Activated CD8-positive, alpha-beta T cell treated with anti-CD3 and anti-CD28 coated beads for 36 hours (primary cell): ENCODE measurements at regions of chr2 and their contacts with region 1.

Region 1: GRCh38 chr2:85354286-85355072 is at the starts of genes ELMOD3 and RETSAT:
- DNase-seq: peak; percentile 99
- ATAC-seq: peak; percentile 99
- H3K4me3 Mint-ChIP-seq: peak within 1 kb of the TSS; percentile 95
- H3K27ac Mint-ChIP-seq: peak within 1 kb of the TSS; percentile 94
- H3K4me1 Mint-ChIP-seq: peaks cover 38% of the 10 kb centered on the region
- H3K27me3 Mint-ChIP-seq: no peaks in the 10 kb centered on the region
- CTCF ChIP-seq: no peak
- total RNA-seq, gene ELMOD3: 11.8 to 13.0 TPM
- total RNA-seq, gene RETSAT: 21.3 to 22.9 TPM

Region 2: DNA sequence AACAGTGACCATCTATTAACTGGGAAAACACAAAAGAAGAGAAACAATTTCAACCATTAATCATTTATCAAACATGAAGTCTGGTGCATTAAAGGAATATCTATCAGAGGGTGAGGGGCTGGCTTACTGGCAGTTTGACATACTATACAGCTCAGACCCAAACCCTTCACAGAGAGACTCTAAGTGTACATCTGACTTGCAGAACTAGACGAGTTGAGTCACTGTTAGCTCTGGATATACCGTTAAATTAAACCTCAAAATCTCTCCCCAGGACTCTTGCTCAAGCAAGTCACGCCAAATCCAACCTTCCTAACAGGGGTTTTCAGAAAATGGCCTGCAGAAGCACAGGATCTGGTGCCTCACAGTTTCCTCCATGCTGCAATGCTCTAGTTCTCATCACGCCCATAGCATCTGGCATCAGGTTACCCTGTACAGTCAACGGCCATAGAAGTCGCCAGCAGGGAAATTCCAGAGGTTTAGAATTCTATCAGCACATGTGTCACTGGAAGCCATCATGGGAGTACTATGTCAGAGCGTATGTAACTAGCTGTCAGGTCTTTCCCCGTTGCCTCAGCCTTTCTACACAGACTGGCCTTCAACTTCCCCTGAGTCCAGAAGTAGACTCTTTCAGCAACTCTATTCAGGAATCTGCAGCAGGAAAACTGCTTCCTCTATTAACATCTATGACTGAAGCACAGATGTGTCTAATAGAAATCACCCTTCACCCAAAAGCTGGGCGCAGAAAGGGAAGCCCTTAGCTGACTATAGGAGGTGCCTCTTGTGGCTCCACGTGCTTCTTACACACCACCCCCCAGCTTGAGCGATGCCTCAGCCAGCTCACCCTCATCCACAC is 36.0 kb before region 1 on chr2:
- CTCF ChIA-PET with region 1: interaction called, 5 read pairs
- POLR2A ChIA-PET with region 1: interaction called, 59 read pairs
- intact Hi-C with region 1: no loop called
- DNase-seq: peak; percentile 63
- ATAC-seq: peak; percentile 82
- H3K4me3 Mint-ChIP-seq: peak overlapping the region; percentile 26
- H3K27ac Mint-ChIP-seq: peak overlapping the region; percentile 89
- H3K4me1 Mint-ChIP-seq: peaks cover 61% of the 10 kb centered on the region
- H3K27me3 Mint-ChIP-seq: no peaks in the 10 kb centered on the region
- CTCF ChIP-seq: no peak

Region 3: GRCh38 chr2:85340034-85340892 is 14.2 kb before region 1 on chr2:
- CTCF ChIA-PET with region 1: no interaction called
- POLR2A ChIA-PET with region 1: interaction called, 16 read pairs
- intact Hi-C with region 1: no loop called
- DNase-seq: no peak
- ATAC-seq: no peak
- H3K4me3 Mint-ChIP-seq: no peak overlapping the region
- H3K27ac Mint-ChIP-seq: no peak overlapping the region
- H3K4me1 Mint-ChIP-seq: no peaks in the 10 kb centered on the region
- H3K27me3 Mint-ChIP-seq: no peaks in the 10 kb centered on the region
- CTCF ChIP-seq: no peak

Region 4: GRCh38 chr2:85369500-85369899 is 15.0 kb after region 1 on chr2:
- CTCF ChIA-PET with region 1: interaction called, 11 read pairs
- POLR2A ChIA-PET with region 1: interaction called, 6 read pairs
- intact Hi-C with region 1: no loop called
- DNase-seq: no peak
- ATAC-seq: no peak
- H3K4me3 Mint-ChIP-seq: no peak overlapping the region
- H3K27ac Mint-ChIP-seq: no peak overlapping the region
- H3K4me1 Mint-ChIP-seq: no peaks in the 10 kb centered on the region
- H3K27me3 Mint-ChIP-seq: no peaks in the 10 kb centered on the region
- CTCF ChIP-seq: no peak